ENCODE measurements at regions of chr13 and their contacts with region 1.

Region 1: DNA sequence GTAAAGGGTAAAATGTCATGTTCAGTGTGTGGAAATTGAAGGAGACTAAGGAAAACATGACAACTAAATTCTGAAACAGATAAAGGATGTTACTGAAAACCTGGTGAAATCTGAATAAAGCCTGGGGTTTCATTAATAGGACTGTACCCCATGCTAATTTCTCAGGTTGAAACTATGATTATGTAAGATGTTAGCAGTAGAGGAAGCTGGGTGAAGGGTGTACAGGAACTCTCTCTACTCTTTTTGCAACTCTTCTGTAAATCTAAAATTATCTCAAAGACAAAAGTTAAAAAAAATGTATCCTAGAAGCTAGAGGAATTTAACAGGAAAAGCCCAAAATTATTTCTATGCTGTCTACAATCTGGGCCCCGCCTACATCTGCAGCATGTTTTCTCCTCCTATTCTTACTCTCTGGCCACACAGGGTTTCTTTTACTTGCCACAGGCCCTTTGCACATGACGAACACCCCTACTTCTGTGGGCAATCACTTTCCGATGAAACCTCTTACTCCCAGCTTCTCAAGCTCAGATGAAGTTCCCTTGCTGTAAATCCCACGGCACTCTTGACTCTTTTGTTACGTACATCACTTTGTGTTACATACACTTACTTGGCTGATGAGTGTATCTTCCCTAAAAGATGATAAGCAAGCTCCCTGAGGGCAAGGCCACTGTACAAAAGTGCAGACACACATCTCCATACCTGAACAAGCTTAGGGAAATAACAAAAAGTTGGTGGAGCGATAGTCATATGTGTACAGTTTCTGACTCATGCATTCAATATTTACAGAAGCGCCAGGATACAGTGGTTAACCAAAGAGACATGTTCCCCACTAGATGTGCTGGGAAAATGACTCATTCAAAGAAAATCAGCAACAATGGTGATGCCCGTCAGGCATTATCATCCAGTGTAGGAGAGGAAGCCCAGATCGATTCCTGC is 32.6 kb downstream of the RUBCNL start:
- DNase-seq: peak; percentile 31
- H3K4me3 Mint-ChIP-seq: no peak overlapping the region
- H3K27ac Mint-ChIP-seq: peak overlapping the region; percentile 82
- H3K4me1 Mint-ChIP-seq: peaks cover 14% of the 10 kb centered on the region
- H3K27me3 Mint-ChIP-seq: no peaks in the 10 kb centered on the region

Region 2: GRCh38 chr13:46387064-46387851 is 32.8 kb after region 1 on chr13 and contains the start of gene RUBCNL:
- intact Hi-C with region 1: loop called (anchors 2 kb)
- DNase-seq: peak; percentile 20
- H3K4me3 Mint-ChIP-seq: peak within 1 kb of the TSS; percentile 78
- H3K27ac Mint-ChIP-seq: peak within 1 kb of the TSS; percentile 7
- H3K4me1 Mint-ChIP-seq: peaks cover 32% of the 10 kb centered on the region
- H3K27me3 Mint-ChIP-seq: peaks cover 41% of the 10 kb centered on the region
- total RNA-seq, gene RUBCNL: 0.76 and 1.1 TPM in 2 replicates